ENCODE measurements at regions of chr2 and their contacts with region 1.

Region 1: GRCh38 chr2:240250985-240251847 is 110.8 kb upstream of the OTOS start:
- DNase-seq: peak; percentile 91
- H3K4me3 Mint-ChIP-seq: peak overlapping the region; percentile 46
- H3K27ac Mint-ChIP-seq: peak overlapping the region; percentile 27
- H3K4me1 Mint-ChIP-seq: peaks cover 22% of the 10 kb centered on the region
- H3K27me3 Mint-ChIP-seq: peaks cover 3% of the 10 kb centered on the region
- CTCF ChIP-seq: no peak

Region 2: GRCh38 chr2:239420077-239420476 is 831.1 kb before region 1 on chr2:
- CTCF ChIA-PET with region 1: no interaction called
- intact Hi-C with region 1: no loop called
- DNase-seq: no peak
- H3K4me3 Mint-ChIP-seq: no peak overlapping the region
- H3K27ac Mint-ChIP-seq: no peak overlapping the region
- H3K4me1 Mint-ChIP-seq: no peaks in the 10 kb centered on the region
- H3K27me3 Mint-ChIP-seq: peaks cover 63% of the 10 kb centered on the region
- CTCF ChIP-seq: no peak

Region 3: GRCh38 chr2:240369801-240370585 is 118.8 kb after region 1 on chr2:
- CTCF ChIA-PET with region 1: interaction called, 3 read pairs
- intact Hi-C with region 1: loop called (anchors 10 kb)
- DNase-seq: peak; percentile 92
- H3K4me3 Mint-ChIP-seq: no peak overlapping the region
- H3K27ac Mint-ChIP-seq: peak overlapping the region; percentile 69
- H3K4me1 Mint-ChIP-seq: peaks cover 15% of the 10 kb centered on the region
- H3K27me3 Mint-ChIP-seq: no peaks in the 10 kb centered on the region
- CTCF ChIP-seq: no peak